ENCODE measurements at regions of chr17 and their contacts with region 1.

Region 1: DNA sequence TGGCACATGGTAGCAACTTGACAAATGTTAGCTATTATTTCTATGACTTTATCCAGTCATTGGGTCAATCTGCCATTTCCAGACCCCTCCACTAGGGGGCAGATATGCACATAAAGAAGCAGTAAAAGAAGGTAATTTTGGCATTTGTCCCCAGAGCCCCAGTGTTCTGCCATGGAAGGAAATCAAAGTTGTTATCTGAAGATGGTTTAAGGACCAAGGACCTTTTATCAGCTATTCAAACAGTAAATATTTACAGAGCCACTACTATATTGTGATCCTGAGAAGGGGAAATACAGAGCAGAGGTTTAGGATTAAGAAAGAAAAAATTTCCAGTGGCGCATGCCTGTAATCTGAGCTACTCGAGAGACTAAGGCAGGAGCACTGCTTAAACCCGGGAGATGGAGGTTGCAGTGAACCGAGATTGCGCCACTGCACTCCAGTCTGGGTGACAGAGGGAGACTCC is 20.0 kb downstream of the TRAF4 start:
- DNase-seq: peak; percentile 87
- ATAC-seq: peak; percentile 78
- H3K4me3 Mint-ChIP-seq: no peak overlapping the region
- H3K27ac Mint-ChIP-seq: no peak overlapping the region
- H3K4me1 Mint-ChIP-seq: peaks cover 16% of the 10 kb centered on the region
- H3K27me3 Mint-ChIP-seq: no peaks in the 10 kb centered on the region

Region 2: DNA sequence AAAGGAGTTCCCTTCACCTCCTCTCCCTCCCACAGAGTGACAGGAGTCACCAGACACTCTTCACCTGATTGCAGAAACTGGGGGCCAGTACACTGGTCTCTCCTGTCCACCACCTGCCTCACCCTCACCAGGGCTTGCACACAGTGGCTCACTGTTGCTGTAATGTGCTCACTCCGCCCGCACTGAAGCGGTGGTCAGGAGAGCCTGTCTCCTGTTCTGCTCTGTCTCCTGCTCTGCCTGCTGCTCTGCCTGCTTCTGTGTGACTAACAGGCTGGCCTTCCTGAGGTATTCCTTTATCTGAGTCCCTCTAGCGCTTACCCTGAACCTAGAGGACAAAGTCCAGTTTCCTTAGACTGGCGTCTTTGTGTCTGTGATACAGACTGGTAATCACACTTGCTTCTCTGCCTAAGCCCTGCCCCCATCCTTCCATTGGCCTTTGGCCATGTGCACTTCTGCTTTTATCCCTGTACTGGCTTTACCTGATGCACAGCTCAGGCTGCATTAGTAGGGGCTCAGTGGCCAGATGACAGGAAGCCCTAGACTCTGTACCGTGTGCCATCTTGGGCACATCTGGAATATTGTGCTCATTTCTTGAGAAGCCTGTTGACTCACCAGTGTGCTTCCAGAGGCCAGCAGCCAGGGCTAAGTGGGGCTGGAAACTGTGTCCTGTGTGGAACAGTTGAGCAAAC is 65.4 kb before region 1 on chr17:
- CTCF ChIA-PET with region 1: no interaction called
- POLR2A ChIA-PET with region 1: no interaction called
- DNase-seq: no peak
- ATAC-seq: no peak
- H3K4me3 Mint-ChIP-seq: no peak overlapping the region
- H3K27ac Mint-ChIP-seq: no peak overlapping the region
- H3K4me1 Mint-ChIP-seq: no peaks in the 10 kb centered on the region
- H3K27me3 Mint-ChIP-seq: no peaks in the 10 kb centered on the region

Region 3: DNA sequence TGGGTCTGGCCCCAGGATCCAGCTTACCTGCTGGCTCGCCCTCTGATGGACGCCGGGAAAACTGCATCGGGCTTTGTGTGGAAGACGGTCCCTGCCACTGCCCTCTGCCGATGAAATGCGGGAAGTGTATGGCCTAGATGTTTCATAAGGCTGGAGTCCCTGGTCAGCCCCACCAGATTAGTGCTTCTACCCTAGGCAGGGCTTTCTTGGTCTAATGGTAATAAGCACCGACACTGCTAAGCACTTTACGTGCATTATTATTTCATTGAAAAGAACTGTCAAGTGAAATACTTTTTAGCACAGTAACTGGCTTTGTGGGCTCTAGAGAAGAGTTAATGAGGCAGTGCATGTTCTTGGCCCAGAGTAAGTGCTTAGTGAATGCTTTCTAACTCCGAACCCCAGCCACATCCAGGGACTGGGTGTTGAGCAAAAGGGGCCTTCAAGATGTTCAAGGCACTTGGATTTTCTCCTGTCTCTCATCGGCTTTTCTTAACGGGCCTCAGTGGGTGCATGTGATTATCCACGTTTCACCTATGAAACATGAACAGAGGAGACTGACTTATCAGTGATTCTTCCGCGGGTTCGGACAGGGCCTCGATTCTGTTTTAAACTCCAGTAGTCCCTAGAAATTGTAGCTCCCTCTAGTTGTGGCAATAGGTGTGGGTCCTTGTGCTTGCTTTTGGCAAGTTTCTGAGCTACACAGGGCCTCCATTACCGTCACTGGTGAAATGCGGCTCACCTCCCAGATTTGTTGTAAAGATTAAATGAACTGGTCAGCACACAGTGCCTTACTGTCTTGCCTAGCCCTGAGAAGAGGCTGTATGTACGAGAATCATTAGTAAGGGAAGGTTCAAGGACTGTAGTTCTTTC is 13.4 kb before region 1 on chr17:
- CTCF ChIA-PET with region 1: interaction called, 133 read pairs
- POLR2A ChIA-PET with region 1: no interaction called
- DNase-seq: peak; percentile 95
- ATAC-seq: peak; percentile 83
- H3K4me3 Mint-ChIP-seq: no peak overlapping the region
- H3K27ac Mint-ChIP-seq: peak overlapping the region; percentile 16
- H3K4me1 Mint-ChIP-seq: peaks cover 34% of the 10 kb centered on the region
- H3K27me3 Mint-ChIP-seq: no peaks in the 10 kb centered on the region

Region 4: GRCh38 chr17:28812091-28812747 is 48.4 kb after region 1 on chr17:
- CTCF ChIA-PET with region 1: interaction called, 59 read pairs
- POLR2A ChIA-PET with region 1: no interaction called
- DNase-seq: peak; percentile 97
- ATAC-seq: peak; percentile 100
- H3K4me3 Mint-ChIP-seq: peak overlapping the region; percentile 82
- H3K27ac Mint-ChIP-seq: peak overlapping the region; percentile 91
- H3K4me1 Mint-ChIP-seq: peaks cover 34% of the 10 kb centered on the region
- H3K27me3 Mint-ChIP-seq: no peaks in the 10 kb centered on the region

Region 5: GRCh38 chr17:28842282-28843012 is 78.6 kb after region 1 on chr17 and contains the start of gene FAM222B:
- CTCF ChIA-PET with region 1: interaction called, 37 read pairs
- POLR2A ChIA-PET with region 1: no interaction called
- DNase-seq: peak; percentile 90
- ATAC-seq: peak; percentile 99
- H3K4me3 Mint-ChIP-seq: peak within 1 kb of the TSS; percentile 100
- H3K27ac Mint-ChIP-seq: peak within 1 kb of the TSS; percentile 97
- H3K4me1 Mint-ChIP-seq: peaks cover 28% of the 10 kb centered on the region
- H3K27me3 Mint-ChIP-seq: no peaks in the 10 kb centered on the region
- total RNA-seq, gene FAM222B: 15.4 to 17.1 TPM

Region 6: GRCh38 chr17:28902819-28903545 is 139.1 kb after region 1 on chr17 and contains the start of gene DHRS13:
- CTCF ChIA-PET with region 1: interaction called, 64 read pairs
- POLR2A ChIA-PET with region 1: interaction called, 3 read pairs
- DNase-seq: peak; percentile 94
- ATAC-seq: peak; percentile 95
- H3K4me3 Mint-ChIP-seq: peak within 1 kb of the TSS; percentile 88
- H3K27ac Mint-ChIP-seq: peak within 1 kb of the TSS; percentile 86
- H3K4me1 Mint-ChIP-seq: peaks cover 36% of the 10 kb centered on the region
- H3K27me3 Mint-ChIP-seq: no peaks in the 10 kb centered on the region
- total RNA-seq, gene DHRS13: 29.2 to 29.3 TPM

Region 7: GRCh38 chr17:28925912-28926365 is 162.1 kb after region 1 on chr17:
- CTCF ChIA-PET with region 1: interaction called, 31 read pairs
- POLR2A ChIA-PET with region 1: no interaction called
- DNase-seq: peak; percentile 70
- ATAC-seq: peak; percentile 94
- H3K4me3 Mint-ChIP-seq: peak overlapping the region; percentile 26
- H3K27ac Mint-ChIP-seq: peak overlapping the region; percentile 88
- H3K4me1 Mint-ChIP-seq: peaks cover 55% of the 10 kb centered on the region
- H3K27me3 Mint-ChIP-seq: no peaks in the 10 kb centered on the region